Activated CD4-positive, alpha-beta memory T cell treated with anti-CD3 and anti-CD28 coated beads for 36 hours (primary cell): ENCODE measurements at regions of chr2 and their contacts with region 1.

Region 1: DNA sequence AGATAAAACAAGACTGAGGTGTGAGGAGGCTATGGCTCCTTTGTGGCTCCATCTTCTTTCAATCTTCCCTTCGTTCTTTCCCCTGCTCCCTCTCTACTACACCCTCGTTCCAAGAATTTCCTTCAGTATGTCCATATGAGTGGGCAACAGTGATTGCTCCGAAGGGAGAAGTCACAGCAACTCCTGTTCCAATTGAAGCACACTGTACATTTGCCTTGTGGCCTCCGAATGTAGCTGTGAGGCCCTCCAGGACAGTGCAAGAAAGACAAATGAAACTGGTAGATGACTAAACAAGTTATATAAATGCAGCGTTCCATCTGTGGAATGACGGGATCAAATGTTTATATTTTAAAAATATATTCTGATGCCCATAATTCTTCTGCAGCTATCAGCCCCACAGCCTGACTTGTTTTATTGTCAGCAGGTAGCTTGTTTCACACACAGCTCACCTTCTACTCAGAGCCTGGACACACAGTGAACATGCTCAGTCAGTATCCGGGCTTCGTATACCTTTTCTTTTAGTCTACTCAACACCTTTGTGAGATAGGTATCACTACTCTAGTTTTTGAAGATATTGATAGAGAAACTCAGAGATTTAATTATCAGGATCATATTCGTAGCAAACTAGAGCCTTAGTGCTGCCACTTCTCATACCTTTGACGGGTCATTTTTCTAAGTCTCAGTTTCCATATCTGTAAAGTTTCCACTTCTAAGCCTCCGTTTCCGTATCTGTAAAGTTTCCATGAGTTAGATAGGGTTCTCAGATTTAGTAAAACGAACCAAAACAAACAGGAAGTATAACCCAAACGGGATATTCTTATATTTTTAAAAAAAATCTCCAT is 216.7 kb upstream of the STON1 start:
- DNase-seq: peak; percentile 25
- H3K4me3 Mint-ChIP-seq: peak overlapping the region; percentile 79
- H3K27ac Mint-ChIP-seq: peak overlapping the region; percentile 98
- H3K4me1 Mint-ChIP-seq: peaks cover 25% of the 10 kb centered on the region
- H3K27me3 Mint-ChIP-seq: no peaks in the 10 kb centered on the region

Region 2: DNA sequence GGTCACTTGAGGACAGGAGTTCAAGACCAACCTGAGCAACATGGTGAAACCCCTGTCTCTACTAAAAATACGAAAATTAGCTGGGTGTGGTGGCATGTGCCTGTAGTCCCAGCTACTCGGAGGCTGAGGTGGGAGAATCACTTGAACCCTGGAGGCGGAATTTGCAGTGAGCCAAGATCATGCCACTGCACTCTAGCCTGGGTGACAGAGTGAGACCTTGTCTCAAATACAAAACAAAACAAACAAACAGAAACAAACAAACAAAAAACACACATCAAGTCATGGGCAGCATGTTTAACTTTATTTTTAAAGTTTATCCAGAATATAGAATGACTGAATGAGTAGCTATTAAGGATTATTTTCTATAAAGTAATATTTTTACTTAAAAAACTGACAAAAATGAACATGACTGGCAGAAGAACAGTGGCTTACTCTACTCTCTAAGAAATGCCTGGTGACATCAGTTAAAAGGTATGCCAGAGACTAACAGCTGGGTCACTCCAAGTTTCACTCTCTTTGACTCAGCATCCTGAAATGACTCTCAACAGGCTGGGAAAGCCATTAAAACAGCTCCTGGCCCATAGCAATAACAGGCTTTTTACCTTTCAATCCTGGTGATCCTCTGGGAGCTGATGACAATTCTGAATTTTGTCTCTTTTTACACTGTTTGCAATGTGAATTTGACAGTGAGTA is 64.9 kb before region 1 on chr2:
- CTCF ChIA-PET with region 1: no interaction called
- POLR2A ChIA-PET with region 1: no interaction called
- intact Hi-C with region 1: loop called (anchors 1 kb)
- DNase-seq: peak; percentile 38
- H3K4me3 Mint-ChIP-seq: no peak overlapping the region
- H3K27ac Mint-ChIP-seq: no peak overlapping the region
- H3K4me1 Mint-ChIP-seq: peaks cover 14% of the 10 kb centered on the region
- H3K27me3 Mint-ChIP-seq: no peaks in the 10 kb centered on the region